Transverse colon (tissue), 4 donors: ENCODE measurements at regions of chr1 and their contacts with region 1.

Region 1: GRCh38 chr1:91885716-91886506 is at the start of gene TGFBR3:
- DNase-seq: peak; percentile 86
- H3K4me3 ChIP-seq: peak within 1 kb of the TSS; percentile 72 to 86 (median 83)
- H3K27ac ChIP-seq: peak within 1 kb of the TSS; percentile 87 to 97 (median 96)
- H3K4me1 ChIP-seq: peaks cover 2 to 22% (median 9%) of the 10 kb centered on the region in 4 donors
- H3K27me3 ChIP-seq: no peaks in the 10 kb centered on the region
- CTCF ChIP-seq: peak; percentile 43 to 78 (median 61)
- EP300 ChIP-seq: no peak
- POLR2A ChIP-seq: peak; percentile 83
- total RNA-seq, gene TGFBR3: 32.9 to 138 (median 58.8) TPM

Region 2: DNA sequence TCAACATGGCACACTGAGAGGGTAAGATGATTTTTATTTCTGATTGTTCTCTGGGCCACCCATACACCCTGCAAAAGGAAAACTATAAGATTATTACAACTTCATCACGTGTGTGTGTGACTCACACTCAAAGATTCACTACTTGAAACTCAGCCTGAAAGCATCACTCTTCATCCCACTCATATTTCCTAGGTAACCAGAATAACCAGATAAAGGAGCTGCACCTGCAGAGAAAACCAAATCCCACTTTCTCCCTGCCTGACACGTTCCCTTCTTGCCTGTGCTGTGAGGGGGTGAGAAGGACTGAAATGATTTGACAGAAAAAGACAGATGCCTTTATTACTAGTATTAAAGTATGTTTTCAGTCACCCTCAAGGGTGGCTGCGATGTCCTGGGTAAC is 131.6 kb before region 1 on chr1:
- in situ Hi-C with region 1: no loop called
- intact Hi-C with region 1: loop called (anchors 10 kb)
- DNase-seq: no peak
- H3K4me3 ChIP-seq: no peak overlapping the region
- H3K27ac ChIP-seq: peak overlapping the region; percentile 48 to 69 (median 56)
- H3K4me1 ChIP-seq: peaks cover 8 to 44% (median 20%) of the 10 kb centered on the region in 4 donors
- H3K27me3 ChIP-seq: no peaks in the 10 kb centered on the region
- CTCF ChIP-seq: no peak
- EP300 ChIP-seq: no peak
- POLR2A ChIP-seq: no peak

Region 3: GRCh38 chr1:91795591-91796389 is 90.1 kb before region 1 on chr1:
- in situ Hi-C with region 1: no loop called
- intact Hi-C with region 1: loop called (anchors 5 kb)
- DNase-seq: no peak
- H3K4me3 ChIP-seq: no peak overlapping the region
- H3K27ac ChIP-seq: peak overlapping the region; percentile 0 to 78 (median 55)
- H3K4me1 ChIP-seq: peaks cover 9 to 38% (median 26%) of the 10 kb centered on the region in 4 donors
- H3K27me3 ChIP-seq: no peaks in the 10 kb centered on the region
- CTCF ChIP-seq: no peak
- EP300 ChIP-seq: no peak
- POLR2A ChIP-seq: no peak

Region 4: GRCh38 chr1:91830242-91831131 is 55.4 kb before region 1 on chr1:
- in situ Hi-C with region 1: no loop called
- intact Hi-C with region 1: loop called (anchors 10 kb)
- DNase-seq: peak; percentile 67
- H3K4me3 ChIP-seq: no peak overlapping the region
- H3K27ac ChIP-seq: peak overlapping the region; percentile 75 to 79 (median 78)
- H3K4me1 ChIP-seq: peaks cover 21 to 64% (median 43%) of the 10 kb centered on the region in 4 donors
- H3K27me3 ChIP-seq: no peaks in the 10 kb centered on the region
- CTCF ChIP-seq: peak in 2 of 5 experiments; percentile 23
- EP300 ChIP-seq: no peak
- POLR2A ChIP-seq: no peak

Region 5: GRCh38 chr1:93579891-93580290 is 1694.0 kb after region 1 on chr1:
- in situ Hi-C with region 1: no loop called
- intact Hi-C with region 1: loop called (anchors 10 kb)
- DNase-seq: peak; percentile 57
- H3K4me3 ChIP-seq: no peak overlapping the region
- H3K27ac ChIP-seq: peak overlapping the region; percentile 86 to 93 (median 88)
- H3K4me1 ChIP-seq: peaks cover 5 to 59% (median 34%) of the 10 kb centered on the region in 4 donors
- H3K27me3 ChIP-seq: no peaks in the 10 kb centered on the region
- CTCF ChIP-seq: no peak
- EP300 ChIP-seq: no peak
- POLR2A ChIP-seq: peak; percentile 34